ENCODE measurements at regions of chr20 and their contacts with region 1.

Region 1: DNA sequence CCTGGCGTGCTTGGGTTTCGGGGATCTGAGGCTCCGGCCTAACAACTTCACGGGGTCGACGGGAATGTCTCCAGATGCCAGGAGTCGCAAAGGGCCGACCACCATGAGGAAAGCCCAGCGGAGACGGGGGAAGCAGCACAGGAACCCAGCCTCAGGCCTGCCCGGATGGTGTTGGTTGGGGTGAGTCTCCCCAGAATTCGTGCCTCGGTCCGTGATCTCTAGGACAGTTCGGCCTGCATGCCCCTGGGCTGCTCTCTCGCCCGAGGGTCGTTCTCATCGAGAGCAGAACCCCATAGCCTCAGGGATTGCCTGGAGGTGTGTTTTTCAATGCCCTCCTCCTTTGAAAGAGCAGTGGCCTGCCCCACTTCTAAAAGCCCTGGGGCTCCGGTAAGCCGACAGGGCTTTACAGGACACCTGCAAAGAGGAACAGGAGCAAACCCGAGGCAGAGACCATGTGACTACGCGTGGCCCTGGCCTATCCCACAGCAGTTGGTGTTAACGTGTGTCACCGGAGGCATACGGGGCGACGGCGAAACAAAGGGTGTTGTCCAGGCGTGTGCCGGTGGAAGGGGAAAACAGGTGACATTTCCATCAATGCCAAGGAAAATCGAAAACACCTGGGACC is 973.1 kb upstream of the DEFB115 start:
- DNase-seq: no peak
- ATAC-seq: no peak
- H3K4me3 Mint-ChIP-seq: peak overlapping the region; percentile 60
- H3K27ac Mint-ChIP-seq: no peak overlapping the region
- H3K4me1 Mint-ChIP-seq: peaks cover 5% of the 10 kb centered on the region
- H3K27me3 Mint-ChIP-seq: no peaks in the 10 kb centered on the region

Region 2: GRCh38 chr20:30376767-30377666 is 92.6 kb after region 1 on chr20:
- CTCF ChIA-PET with region 1: no interaction called
- POLR2A ChIA-PET with region 1: no interaction called
- intact Hi-C with region 1: loop called in 1 of 2 experiments (anchors 5 kb)
- DNase-seq: peak; percentile 92
- ATAC-seq: peak; percentile 93
- H3K4me3 Mint-ChIP-seq: peak overlapping the region; percentile 79
- H3K27ac Mint-ChIP-seq: peak overlapping the region; percentile 93
- H3K4me1 Mint-ChIP-seq: peaks cover 33% of the 10 kb centered on the region
- H3K27me3 Mint-ChIP-seq: no peaks in the 10 kb centered on the region

Measured in activated CD4-positive, alpha-beta T cell treated with anti-CD3 and anti-CD28 coated beads for 36 hours (primary cell).